Astrocyte of the cerebellum (primary cell): ENCODE measurements at regions of chr12 and their contacts with region 1.

Region 1: DNA sequence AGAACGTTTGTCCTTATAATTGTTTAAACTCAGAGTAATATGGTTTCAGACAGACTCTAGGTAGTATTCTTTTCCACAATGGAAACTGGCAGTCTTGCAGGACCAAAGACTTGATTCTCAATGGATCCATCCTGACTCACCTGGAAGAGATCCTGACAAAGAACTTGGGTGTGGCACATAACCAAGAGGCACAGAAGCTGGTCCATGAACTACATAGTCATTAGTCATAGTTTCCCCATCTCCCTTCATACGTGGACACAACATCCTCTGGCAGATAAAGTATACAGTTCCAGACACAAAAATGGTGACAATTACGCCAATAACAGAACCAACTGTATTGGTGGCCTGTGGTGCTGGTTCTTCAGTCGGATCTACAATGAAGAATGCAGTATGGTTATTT is 55.8 kb downstream of the BCL2L14 start:
- DNase-seq: no peak
- H3K4me3 ChIP-seq: no peak overlapping the region
- CTCF ChIP-seq: no peak

Region 2: DNA sequence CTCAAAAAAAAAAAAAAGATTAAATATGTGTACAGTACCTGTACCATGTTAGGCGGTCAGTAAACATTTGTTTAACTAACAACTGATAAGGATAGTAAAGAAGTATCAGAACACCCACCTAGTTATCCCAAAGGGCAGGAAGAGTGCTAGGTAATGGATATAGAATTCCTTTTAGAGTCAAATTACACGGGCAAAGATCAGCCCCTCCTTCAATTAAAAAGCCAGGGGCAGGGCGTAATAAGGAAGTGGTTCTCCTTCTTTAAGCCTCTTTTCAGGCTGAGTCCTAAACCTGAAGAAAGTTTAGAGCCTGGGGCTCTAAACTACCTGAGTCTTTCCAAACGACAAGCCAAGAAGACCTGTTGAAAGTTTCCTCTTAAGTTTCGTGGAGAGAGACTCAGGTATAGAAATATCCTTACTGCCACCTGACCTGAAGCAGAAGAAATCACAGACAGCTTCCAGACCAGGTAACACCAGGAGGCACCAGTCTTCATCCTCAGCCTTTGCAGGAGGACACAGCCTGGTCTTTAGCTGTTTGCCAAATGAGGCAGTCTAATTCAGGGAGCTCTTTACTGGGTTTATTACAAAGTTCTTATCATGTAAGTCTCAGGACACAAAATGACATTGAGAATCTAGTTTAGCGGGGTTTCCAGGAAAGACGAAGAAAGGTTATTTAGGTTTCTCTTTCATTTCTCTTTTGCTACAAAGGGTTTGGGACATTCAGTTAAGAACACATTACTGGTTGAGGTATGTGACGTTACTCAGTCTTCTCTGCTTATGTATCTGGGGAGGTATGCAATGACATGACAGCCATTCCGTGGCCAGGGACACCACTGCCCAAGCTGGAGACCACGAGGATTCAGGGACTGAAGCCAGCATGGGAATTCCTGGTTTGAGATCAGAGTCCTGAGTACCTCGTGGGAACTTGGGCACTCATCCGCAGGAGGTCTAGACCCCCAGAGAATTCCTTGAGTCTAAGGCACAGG is 55.6 kb before region 1 on chr12 and contains the start of gene BCL2L14:
- in situ Hi-C with region 1: no loop called
- DNase-seq: no peak
- H3K4me3 ChIP-seq: no peak within 1 kb of the TSS
- CTCF ChIP-seq: no peak

Region 3: DNA sequence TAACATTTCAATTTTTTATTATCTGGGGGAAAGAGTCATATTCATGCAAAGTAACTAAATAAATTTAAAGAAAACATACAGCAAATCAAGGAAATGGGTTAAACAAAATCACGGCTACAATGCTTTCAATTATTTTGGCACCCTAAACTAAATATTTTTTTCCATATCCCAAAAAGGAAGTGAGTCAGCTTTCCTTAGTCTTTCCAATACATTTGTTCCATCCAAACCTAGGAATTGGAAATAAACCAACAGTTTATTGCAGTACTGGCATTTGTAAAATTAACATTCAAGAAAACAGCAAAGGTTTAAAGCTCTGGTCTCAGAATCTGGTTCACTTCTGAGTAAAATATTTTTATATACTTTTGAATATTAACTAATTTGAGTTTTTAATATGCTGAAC is 33.4 kb after region 1 on chr12:
- in situ Hi-C with region 1: loop called (anchors 5 kb)
- DNase-seq: peak; percentile 62
- H3K4me3 ChIP-seq: no peak overlapping the region
- CTCF ChIP-seq: no peak